GM18951 (cell line): ENCODE measurements at regions of chr2 and their contacts with region 1.

Region 1: GRCh38 chr2:158923180-158923594 is 45.3 kb upstream of the TANC1 start:
- POLR2A ChIP-seq: no peak

Region 2: DNA sequence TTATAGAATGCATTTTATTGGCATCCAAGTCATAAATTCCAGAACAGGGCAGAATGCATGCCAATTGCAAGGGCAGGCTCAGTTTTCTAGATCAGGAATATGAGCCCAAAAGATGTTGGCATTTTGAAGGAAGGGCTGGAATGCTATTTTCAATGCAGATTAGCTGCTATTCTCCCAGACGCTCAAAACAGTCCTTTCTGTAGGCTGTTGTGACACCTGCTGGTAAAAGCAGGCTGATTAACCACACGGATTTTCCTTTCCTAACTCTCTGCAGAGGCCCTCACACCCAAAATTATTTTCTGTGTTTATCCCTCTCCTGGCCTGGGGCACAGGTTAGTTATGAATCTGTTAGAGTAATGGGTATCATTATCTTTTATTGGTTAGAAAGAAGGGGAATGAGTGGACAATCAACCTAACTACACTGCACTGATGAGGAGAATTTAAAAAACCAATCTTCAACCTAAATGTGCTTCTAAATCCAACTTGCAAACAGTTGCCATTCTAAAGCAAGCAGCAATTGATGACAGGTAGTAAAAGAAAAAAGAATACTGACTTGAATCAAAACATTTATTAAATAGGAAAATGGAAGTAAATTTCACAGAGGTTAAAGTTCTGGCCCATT is 1045.2 kb after region 1 on chr2:
- in situ Hi-C with region 1: loop called (anchors 25 kb)
- POLR2A ChIP-seq: no peak